OCI-LY7 (cell line): ENCODE measurements at regions of chr12 and their contacts with region 1.

Region 1: GRCh38 chr12:112382232-112382796 is at the start of gene HECTD4:
- DNase-seq: peak; percentile 94
- H3K4me3 ChIP-seq: peak within 1 kb of the TSS; percentile 80
- H3K27ac ChIP-seq: peak within 1 kb of the TSS; percentile 80
- H3K4me1 ChIP-seq: peaks cover 14% of the 10 kb centered on the region
- CTCF ChIP-seq: no peak
- total RNA-seq, gene HECTD4: 18.1 and 34.5 TPM in 2 replicates

Region 2: DNA sequence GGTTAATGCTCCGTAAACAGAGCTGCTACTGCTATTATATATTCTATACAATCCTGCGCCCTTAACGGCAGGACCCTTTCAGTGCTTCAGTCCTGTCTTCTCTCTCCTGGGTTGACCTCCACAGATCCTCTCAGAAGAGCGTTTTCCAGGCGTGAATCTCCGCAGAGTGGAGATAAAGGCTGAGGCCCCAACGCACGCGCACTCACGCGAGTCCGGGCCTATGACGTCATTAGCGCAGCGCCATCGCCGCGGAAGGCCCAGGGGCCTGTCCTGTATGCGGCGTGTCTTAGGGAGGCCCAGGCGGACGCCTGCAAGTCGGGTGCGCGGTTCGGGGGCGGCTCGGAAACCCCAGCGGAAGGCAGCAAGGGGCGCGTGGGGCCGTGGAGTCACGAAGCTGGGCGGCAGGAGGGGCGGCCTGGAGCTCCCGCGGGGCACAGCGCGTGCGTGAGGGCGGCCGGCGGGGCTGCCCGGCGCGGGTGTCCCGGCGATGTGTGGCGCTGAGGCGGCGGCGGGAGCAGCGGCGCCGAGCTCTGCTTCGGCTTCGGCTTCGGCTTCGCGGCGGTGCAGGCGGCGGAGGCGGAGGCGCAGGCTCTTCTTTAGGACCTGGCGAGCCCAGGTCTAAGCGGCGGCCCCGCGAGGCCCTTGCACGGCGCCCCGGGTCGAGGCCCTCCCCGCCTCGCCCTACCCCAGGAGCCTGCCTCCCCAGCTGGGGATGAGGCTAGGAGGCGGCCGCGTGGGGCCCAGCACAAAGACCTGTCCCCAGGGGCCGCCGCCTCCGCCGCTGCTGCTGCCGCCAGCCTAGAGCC is 540.4 kb before region 1 on chr12 and contains the start of gene MAPKAPK5:
- CTCF ChIA-PET with region 1: no interaction called
- POLR2A ChIA-PET with region 1: no interaction called
- intact Hi-C with region 1: loop called (anchors 10 kb)
- DNase-seq: peak; percentile 97
- H3K4me3 ChIP-seq: peak within 1 kb of the TSS; percentile 86
- H3K27ac ChIP-seq: peak within 1 kb of the TSS; percentile 71
- H3K4me1 ChIP-seq: peaks cover 21% of the 10 kb centered on the region
- CTCF ChIP-seq: no peak
- total RNA-seq, gene MAPKAPK5: 79.2 and 83.5 TPM in 2 replicates

Region 3: DNA sequence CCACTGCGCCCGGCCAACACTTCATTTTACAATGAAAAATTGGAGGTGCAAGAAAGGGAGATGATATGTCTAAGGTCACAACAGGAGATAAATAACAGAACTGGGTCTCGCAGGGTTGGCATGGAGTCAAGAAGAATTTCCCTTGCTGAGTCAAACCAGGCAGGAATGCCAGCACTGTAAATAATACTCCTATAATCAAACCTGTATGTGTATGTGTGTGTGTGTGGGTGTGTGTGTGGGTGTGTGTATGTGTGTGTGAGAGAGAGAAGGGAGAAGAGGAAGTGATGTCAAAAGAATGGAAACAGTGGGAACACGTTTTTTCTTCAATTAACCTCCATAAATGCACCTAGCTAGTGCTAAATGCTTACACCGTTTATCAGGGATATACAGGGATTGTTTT is 439.8 kb before region 1 on chr12:
- CTCF ChIA-PET with region 1: no interaction called
- POLR2A ChIA-PET with region 1: no interaction called
- intact Hi-C with region 1: loop called (anchors 2 kb)
- DNase-seq: no peak
- H3K4me3 ChIP-seq: no peak overlapping the region
- H3K27ac ChIP-seq: no peak overlapping the region
- H3K4me1 ChIP-seq: no peaks in the 10 kb centered on the region
- CTCF ChIP-seq: no peak

Region 4: GRCh38 chr12:112108201-112109079 is 273.9 kb before region 1 on chr12 and contains the start of gene NAA25:
- CTCF ChIA-PET with region 1: no interaction called
- POLR2A ChIA-PET with region 1: no interaction called
- intact Hi-C with region 1: loop called (anchors 10 kb)
- DNase-seq: peak; percentile 89
- H3K4me3 ChIP-seq: peak within 1 kb of the TSS; percentile 90
- H3K27ac ChIP-seq: peak within 1 kb of the TSS; percentile 85
- H3K4me1 ChIP-seq: peaks cover 43% of the 10 kb centered on the region
- CTCF ChIP-seq: no peak
- total RNA-seq, gene NAA25: 21.6 and 27.4 TPM in 2 replicates

Region 5: DNA sequence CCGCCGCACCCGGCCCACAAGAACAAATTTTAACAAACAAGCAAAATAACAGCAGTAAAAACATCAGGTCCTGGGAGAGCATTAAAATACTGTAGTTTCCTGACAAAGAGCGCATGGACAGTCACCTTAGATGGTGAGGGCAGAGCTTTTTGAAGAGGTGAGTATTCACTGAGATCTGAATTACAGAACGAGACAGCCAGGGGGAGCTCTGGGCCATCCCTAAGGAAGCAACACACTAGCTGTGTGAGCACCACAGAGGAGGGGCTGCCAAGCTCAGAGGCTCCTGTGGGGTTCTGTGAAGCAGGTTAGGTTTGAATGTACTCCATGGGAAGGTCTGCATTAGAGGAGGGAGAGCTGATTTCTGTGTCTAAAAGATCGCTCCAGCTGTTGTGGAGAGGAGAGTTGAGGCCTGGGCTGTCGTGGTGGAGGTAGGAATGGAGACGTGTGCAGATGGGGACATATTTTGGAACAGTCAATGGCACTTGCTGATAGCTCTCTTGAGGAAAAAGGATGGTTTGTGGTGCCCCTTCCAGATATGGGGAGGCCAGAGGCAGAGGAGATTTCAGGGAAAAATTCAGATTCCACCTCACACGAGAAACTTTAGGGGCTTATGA is 184.1 kb before region 1 on chr12:
- CTCF ChIA-PET with region 1: no interaction called
- POLR2A ChIA-PET with region 1: no interaction called
- intact Hi-C with region 1: loop called (anchors 1 kb)
- DNase-seq: peak; percentile 73
- H3K4me3 ChIP-seq: no peak overlapping the region
- H3K27ac ChIP-seq: no peak overlapping the region
- H3K4me1 ChIP-seq: no peaks in the 10 kb centered on the region
- CTCF ChIP-seq: peak; percentile 84

Region 6: DNA sequence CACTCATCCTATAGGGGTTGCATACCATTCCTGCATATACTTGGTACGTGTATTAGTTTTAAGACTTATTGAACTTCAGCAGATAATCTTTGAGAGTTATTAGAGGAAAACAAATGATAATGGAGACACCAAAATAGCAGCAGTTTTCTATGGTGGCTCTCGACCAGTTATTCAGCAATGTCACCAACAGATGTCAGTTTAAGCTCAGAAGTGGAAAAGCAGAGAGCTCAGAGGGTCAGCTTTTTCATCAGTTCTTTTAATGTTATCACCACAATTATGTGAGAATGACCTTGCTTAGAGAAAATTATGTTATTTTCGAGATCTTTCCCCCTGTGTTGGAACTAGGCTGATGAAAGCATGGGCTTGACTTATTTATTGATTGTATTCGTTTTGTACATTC is 68.4 kb after region 1 on chr12:
- CTCF ChIA-PET with region 1: no interaction called
- POLR2A ChIA-PET with region 1: no interaction called
- intact Hi-C with region 1: no loop called
- DNase-seq: no peak
- H3K4me3 ChIP-seq: no peak overlapping the region
- H3K27ac ChIP-seq: no peak overlapping the region
- H3K4me1 ChIP-seq: no peaks in the 10 kb centered on the region
- CTCF ChIP-seq: peak; percentile 24; the same call in 1 of the 2 replicates